ENCODE measurements at regions of chr20 and their contacts with region 1.

Region 1: DNA sequence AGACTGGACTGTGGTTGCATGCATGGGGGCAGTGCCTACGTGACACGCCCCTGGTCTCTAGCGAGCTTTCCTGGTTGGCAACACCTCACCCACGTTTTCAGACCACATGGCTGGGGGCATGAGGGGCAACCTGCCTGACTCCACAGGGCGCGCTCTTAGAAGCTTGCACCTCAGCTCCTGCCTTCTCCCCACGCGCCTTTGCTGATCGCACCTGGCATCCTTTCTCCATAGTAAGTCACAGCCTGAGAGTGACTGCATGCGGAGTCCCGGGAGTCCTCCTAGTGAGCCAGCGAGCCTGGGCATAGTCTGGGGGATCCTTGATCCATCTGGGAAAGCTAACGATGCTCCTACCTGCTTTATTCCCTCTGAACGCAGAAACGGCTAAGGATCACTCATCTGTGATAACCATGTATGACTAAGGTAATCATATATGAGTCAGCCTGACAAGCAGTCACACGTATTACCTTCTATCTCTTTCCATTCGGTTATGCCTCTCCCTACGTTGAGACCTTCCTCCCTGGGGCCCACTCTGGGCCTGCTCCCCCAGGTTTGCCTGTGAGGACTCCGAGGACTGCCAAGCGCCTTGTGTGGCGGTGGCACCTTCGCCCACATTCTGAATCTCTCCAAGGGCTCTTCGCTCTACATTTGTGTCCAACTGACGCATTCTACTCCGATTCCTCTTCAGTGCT is 4.5 kb downstream of the TCFL5 start:
- DNase-seq: peak in 1 of 42 donors; percentile 16

Region 2: DNA sequence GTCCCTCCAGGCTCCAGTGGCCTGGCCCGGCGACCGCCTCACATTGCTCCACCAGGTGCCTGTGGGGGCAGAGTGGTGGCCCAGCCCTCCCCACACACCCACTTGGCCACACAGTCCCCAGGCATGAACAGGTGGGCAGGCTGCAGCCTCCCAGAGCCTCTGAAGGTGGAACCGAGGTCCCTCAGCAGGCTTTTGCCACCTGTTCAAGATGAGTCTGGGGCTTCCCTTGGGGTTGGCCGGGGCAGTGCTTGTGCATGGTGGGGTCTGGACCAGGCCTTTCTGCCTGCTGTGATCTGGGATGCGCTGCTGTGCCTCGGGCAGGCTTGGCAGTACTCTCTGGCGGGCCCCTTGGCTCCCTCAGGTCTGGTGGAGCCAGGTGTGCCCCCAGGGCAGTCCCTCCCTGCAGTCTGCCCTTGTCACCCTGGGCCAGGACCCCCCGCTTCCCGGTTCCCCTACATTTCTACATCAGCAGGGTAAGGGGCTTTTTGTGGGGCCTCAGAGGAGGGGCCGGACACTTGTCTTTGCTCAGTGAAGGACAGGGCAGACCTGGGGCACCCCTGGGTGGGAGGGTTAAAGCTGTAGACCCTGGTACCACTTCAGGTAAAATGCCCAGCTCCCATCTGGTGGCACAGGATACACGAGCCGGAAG is 42.9 kb before region 1 on chr20:
- intact Hi-C with region 1: loop called (anchors 5 kb)
- DNase-seq: no peak